Posterior vena cava (tissue), 2 donors: ENCODE measurements at regions of chr1 and their contacts with region 1.

Region 1: DNA sequence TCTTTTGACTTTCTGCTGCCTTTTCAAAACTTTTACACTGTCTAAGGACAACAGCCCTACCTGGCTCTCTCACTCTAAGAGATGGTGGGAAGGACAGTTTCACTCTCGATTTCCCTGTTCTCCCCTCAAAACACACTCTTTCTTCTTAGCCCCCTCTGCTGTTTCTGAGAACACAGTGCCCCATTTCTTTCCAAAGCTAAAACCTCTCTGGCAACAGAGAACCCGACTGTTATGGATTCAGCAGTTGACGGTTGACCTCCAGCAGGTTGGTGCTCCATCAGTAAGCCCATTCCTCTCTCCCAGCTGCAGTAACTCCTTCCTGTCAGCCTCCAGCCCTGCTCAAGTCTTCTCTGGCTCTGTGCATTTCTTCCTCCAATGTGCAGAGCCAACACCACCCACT is 88.2 kb upstream of the ABCD3 start:
- DNase-seq: no peak

Region 2: GRCh38 chr1:94237291-94238226 is 92.4 kb before region 1 on chr1 and contains the start of gene ARHGAP29:
- intact Hi-C with region 1: loop called (anchors 5 to 10 kb)
- DNase-seq: peak; percentile 91
- total RNA-seq, gene ARHGAP29: 39.3 to 51.3 TPM

Region 3: GRCh38 chr1:94247138-94248094 is 82.6 kb before region 1 on chr1:
- intact Hi-C with region 1: loop called (anchors 5 to 10 kb)
- DNase-seq: peak; percentile 90

Region 4: DNA sequence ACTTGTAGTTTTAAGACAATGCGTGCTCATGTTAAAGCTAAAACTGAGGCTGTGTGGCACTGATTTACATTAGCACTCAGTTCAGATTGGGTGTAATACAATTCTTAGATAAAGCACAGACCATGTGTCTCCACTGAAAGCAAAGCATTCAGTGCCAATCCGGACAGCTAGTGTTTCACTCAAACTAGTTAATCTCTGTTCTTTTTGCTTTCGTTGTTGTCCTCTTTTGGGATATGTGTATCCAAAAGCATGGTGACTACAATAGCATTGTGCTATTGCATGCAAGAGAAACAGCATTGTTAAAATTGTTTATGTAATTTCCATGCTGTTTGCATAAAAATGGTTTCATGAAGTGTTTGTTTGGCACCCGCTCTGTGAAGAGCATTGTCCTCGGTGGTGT is 157.0 kb after region 1 on chr1:
- intact Hi-C with region 1: no loop called
- DNase-seq: no peak